Naive thymus-derived CD4-positive, alpha-beta T cell (primary cell): ENCODE measurements at regions of chr19 and their contacts with region 1.

Region 1: DNA sequence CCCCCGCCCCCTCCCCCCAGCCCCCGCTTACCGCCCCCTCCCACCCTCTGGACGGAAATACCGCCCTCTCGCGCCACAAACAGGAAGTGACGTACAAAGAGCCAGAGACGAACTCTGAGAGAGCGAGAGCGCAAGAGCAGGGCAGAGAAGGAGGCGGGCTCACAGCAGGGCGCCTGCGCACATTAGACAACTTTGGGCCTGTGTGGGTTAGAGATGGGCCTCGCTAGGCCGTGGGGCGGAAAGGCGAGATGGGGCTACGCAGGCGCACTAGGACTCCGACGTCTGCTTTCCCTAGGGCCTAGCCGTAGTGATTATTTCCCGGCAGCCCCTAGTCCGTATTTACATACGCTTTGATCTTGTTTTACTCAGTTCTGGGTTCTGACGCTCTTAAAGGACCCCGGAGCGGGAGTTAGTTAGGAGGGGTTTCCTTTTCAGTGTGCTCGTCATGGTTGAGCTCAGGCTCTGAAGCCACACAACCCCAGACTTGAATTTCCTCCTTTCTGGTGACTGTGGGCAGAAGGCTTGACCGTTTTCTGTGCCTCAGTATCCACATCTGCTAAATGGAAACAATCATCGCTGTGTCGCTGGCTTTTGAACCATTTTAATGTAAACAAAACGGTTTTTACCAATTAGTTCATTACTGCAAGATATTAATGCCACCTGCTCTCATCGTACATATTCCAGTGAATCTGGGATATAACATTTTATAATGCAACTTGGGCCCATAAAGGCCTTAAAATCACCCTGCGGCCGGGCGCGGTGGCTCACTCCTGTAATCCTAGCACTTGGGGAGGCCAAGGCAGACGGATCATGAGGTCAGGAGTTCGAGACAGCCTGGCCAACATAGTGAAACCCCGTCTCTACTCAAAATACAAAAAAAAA is 449 bp upstream of the AKT2 start:
- DNase-seq: peak; percentile 84 to 100 (median 99)
- ATAC-seq: peak; percentile 89
- H3K4me3 ChIP-seq: peak overlapping the region; percentile 81
- H3K4me3 Mint-ChIP-seq: peak overlapping the region; percentile 84 to 97 (median 92)
- H3K27ac ChIP-seq: peak overlapping the region; percentile 97
- H3K27ac Mint-ChIP-seq: peak overlapping the region; percentile 96 to 100 (median 99)
- H3K4me1 ChIP-seq: peaks cover 13 to 38% of the 10 kb centered on the region in 2 donors
- H3K4me1 Mint-ChIP-seq: peaks cover 24 to 59% (median 49%) of the 10 kb centered on the region in 7 donors
- H3K27me3 ChIP-seq: no peaks in the 10 kb centered on the region
- H3K27me3 Mint-ChIP-seq: peaks cover 0 to 2% (median 0%) of the 10 kb centered on the region in 5 donors

Region 2: DNA sequence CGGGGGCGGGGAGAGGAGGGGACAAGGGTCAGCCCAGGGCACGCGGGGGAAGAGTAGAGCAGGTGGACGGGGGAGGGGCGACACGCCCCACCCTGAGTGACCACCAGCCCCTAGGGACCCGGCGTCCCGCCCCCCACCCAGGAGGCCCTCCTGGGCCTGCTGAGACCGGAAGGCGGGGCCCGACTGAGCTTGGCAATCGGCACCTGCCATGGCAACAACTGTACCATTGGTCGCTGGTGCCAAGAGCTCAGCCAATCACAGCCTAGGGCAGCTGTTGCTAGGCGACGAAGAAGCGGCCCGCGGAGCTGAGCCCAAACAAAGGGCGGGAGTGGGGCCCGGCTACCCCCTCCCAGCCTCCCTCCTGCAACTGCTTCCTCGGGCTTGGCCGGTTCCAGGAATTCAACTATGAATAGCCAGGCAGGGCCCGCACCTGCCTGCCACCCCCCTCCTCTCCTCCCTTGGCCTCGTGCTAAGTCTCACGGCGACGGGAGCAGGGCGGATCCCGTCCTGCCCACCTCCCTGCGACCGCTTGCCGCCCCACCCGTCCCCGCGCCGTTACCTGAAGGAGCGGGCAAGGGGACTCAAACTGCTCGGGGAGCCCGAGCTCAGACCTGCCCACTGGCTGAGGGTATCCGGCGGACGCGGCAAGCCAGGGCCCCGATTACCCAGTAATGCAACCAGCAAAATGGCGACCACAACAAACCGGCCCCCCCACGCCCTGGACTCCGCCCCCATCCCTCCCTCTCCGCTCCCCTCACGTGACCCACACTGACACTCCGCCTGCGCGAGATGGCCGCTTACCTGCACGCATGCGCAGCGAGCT is 451.9 kb before region 1 on chr19 and contains the start of gene DYRK1B:
- CTCF ChIA-PET with region 1: no interaction called
- POLR2A ChIA-PET with region 1: no interaction called
- intact Hi-C with region 1: loop called in 1 of 2 experiments (anchors 1 kb)
- DNase-seq: peak; percentile 90 to 99 (median 98)
- ATAC-seq: peak; percentile 92
- H3K4me3 ChIP-seq: peak within 1 kb of the TSS; percentile 100
- H3K4me3 Mint-ChIP-seq: peak within 1 kb of the TSS; percentile 60 to 88 (median 81)
- H3K27ac ChIP-seq: peak within 1 kb of the TSS; percentile 96
- H3K27ac Mint-ChIP-seq: peak within 1 kb of the TSS; percentile 85 to 96 (median 92)
- H3K4me1 ChIP-seq: peaks cover 17 to 23% of the 10 kb centered on the region in 2 donors
- H3K4me1 Mint-ChIP-seq: peaks cover 19 to 37% (median 27%) of the 10 kb centered on the region in 7 donors
- H3K27me3 ChIP-seq: no peaks in the 10 kb centered on the region
- H3K27me3 Mint-ChIP-seq: no peaks in the 10 kb centered on the region
- total RNA-seq, gene DYRK1B: 12.3 to 38.9 (median 23.5) TPM

Region 3: GRCh38 chr19:40110570-40110969 is 175.0 kb before region 1 on chr19:
- CTCF ChIA-PET with region 1: no interaction called
- POLR2A ChIA-PET with region 1: no interaction called
- intact Hi-C with region 1: no loop called
- DNase-seq: no peak
- ATAC-seq: no peak
- H3K4me3 ChIP-seq: no peak overlapping the region
- H3K4me3 Mint-ChIP-seq: no peak overlapping the region
- H3K27ac ChIP-seq: no peak overlapping the region
- H3K27ac Mint-ChIP-seq: no peak overlapping the region
- H3K4me1 ChIP-seq: no peaks in the 10 kb centered on the region
- H3K4me1 Mint-ChIP-seq: no peaks in the 10 kb centered on the region
- H3K27me3 ChIP-seq: no peaks in the 10 kb centered on the region
- H3K27me3 Mint-ChIP-seq: peaks cover 0 to 12% (median 7%) of the 10 kb centered on the region in 5 donors

Region 4: DNA sequence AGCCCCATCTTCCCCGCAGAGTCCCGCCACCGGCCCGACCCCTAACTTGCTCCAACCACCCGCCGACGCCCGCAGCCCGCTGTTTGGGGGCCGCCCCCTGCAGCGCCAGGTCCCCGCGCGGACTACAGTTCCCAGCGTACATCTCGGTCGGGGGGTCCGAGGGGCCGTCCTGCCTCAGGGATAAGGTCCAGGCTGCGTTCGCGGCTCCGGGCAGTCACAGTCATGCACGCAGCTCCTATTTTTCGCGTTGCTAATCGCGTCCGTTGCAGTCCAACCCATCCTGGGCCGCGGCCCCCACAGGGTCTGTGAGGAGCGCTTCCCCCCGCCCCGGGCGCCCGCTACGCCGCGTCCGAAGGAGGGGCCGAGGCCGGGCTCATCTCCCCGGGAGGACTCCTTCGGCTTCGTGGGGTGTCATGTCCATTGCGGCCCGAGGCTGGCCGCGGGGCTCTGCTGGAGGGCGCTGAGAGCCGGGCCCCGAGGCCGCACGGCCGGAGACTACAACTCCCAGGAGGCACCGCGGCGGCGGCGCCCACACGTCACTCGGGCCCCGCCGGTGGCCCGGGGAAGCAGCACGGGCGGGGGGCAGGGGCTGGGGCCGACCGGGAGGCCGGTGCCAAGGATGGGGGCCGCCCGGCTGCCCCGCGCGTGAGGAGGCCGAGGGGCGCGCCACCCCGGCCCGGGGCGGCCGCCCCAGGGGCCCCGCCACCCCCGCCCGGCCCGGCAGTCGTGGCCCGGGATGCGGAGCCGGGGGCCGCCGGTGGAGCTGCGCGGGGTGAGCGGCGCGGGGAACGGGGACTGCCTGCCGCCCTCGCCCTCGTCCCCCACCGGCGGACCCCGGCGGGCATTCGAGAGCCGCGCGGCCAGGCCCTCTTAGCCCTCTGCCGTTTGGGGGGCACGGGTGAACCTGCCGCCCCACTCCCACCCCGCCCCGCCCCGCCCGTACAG is 94.4 kb before region 1 on chr19 and contains the start of gene MAP3K10:
- CTCF ChIA-PET with region 1: no interaction called
- POLR2A ChIA-PET with region 1: no interaction called
- intact Hi-C with region 1: loop called (anchors 1 kb)
- DNase-seq: peak; percentile 50 to 84 (median 67)
- ATAC-seq: peak; percentile 95
- H3K4me3 ChIP-seq: peak within 1 kb of the TSS; percentile 97
- H3K4me3 Mint-ChIP-seq: peak within 1 kb of the TSS; percentile 76 to 92 (median 86)
- H3K27ac ChIP-seq: peak within 1 kb of the TSS; percentile 86
- H3K27ac Mint-ChIP-seq: peak within 1 kb of the TSS; percentile 53 to 94 (median 87)
- H3K4me1 ChIP-seq: peaks cover 5 to 10% of the 10 kb centered on the region in 2 donors
- H3K4me1 Mint-ChIP-seq: peaks cover 14 to 39% (median 30%) of the 10 kb centered on the region in 7 donors
- H3K27me3 ChIP-seq: no peaks in the 10 kb centered on the region
- H3K27me3 Mint-ChIP-seq: no peaks in the 10 kb centered on the region
- total RNA-seq, gene MAP3K10: 22.3 to 31.5 (median 27.0) TPM

Region 5: DNA sequence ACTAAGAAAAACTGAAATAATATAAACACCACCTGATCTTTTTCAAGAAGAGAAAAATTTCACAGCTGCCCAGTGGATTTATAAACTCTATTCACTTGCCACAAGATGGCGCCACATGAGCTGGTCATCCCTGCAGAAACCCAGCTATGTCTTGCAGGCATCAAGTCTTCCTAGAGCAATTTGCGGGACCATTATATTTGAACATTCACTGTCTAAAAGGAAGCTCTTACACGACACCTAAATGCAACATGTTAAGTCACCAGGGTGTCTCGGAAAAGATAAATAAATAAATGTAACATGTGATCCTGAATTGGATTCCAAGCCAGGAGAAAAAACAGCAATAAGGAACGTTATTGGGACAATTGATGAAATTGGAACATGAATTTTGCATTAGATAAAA is 19.8 kb after region 1 on chr19:
- CTCF ChIA-PET with region 1: interaction called, 3 read pairs
- POLR2A ChIA-PET with region 1: no interaction called
- intact Hi-C with region 1: loop called in 1 of 2 experiments (anchors 1 kb)
- DNase-seq: peak; percentile 39 to 75 (median 63)
- ATAC-seq: peak; percentile 80
- H3K4me3 ChIP-seq: no peak overlapping the region
- H3K4me3 Mint-ChIP-seq: no peak overlapping the region
- H3K27ac ChIP-seq: no peak overlapping the region
- H3K27ac Mint-ChIP-seq: no peak overlapping the region
- H3K4me1 ChIP-seq: no peaks in the 10 kb centered on the region
- H3K4me1 Mint-ChIP-seq: peaks cover 0 to 5% (median 4%) of the 10 kb centered on the region in 7 donors
- H3K27me3 ChIP-seq: no peaks in the 10 kb centered on the region
- H3K27me3 Mint-ChIP-seq: no peaks in the 10 kb centered on the region

Region 6: GRCh38 chr19:40425450-40426287 is 140.1 kb after region 1 on chr19 and contains the start of gene SERTAD1:
- CTCF ChIA-PET with region 1: no interaction called
- POLR2A ChIA-PET with region 1: no interaction called
- intact Hi-C with region 1: loop called in 1 of 2 experiments (anchors 1 kb)
- DNase-seq: peak; percentile 99 to 100 (median 100)
- ATAC-seq: peak; percentile 96
- H3K4me3 ChIP-seq: peak within 1 kb of the TSS; percentile 77
- H3K4me3 Mint-ChIP-seq: peak within 1 kb of the TSS; percentile 90 to 99 (median 96)
- H3K27ac ChIP-seq: peak within 1 kb of the TSS; percentile 87
- H3K27ac Mint-ChIP-seq: peak within 1 kb of the TSS; percentile 92 to 100 (median 98)
- H3K4me1 ChIP-seq: peaks cover 15 to 18% of the 10 kb centered on the region in 2 donors
- H3K4me1 Mint-ChIP-seq: peaks cover 12 to 38% (median 24%) of the 10 kb centered on the region in 7 donors
- H3K27me3 ChIP-seq: no peaks in the 10 kb centered on the region
- H3K27me3 Mint-ChIP-seq: peaks cover 0 to 2% (median 0%) of the 10 kb centered on the region in 5 donors
- total RNA-seq, gene SERTAD1: 8.1 to 30.9 (median 13.5) TPM

Region 7: DNA sequence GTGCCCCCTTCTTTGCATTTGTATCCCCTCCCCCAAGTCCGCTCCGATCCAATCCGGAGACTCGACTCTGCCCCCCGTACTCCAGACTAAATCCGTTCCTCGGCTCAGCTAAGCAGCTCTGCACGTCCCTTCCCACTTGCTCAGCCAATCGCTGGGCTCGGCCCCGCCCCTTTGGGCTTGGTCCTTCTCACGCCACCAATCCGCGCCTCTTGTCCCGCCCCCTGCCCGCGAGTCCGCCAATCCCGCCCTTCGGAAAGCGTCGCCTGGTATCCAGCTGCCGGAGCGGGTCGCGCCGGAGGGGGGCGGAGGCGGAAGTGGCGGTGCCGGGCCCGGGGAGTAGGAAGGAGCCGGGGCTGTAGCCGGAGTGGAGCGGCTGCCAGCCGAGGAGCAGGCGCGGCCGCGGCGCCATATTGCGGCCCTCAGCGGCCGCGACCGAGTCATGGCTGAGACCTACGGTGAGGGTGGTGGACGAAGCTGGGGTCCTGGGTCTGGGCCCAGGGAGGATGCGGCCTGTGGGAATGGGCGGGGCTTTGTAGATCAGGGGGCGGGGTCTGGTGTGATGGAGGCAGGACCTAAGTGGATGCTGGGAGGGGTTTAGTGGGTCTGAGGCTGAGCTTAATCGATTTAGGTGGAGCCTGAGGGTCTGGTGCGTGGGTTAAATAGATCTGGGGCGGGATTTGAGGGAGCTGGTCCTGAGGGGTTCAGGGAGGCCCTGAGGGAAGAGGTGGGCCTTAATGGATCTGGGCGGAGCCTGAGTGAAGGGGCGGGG is 492.5 kb after region 1 on chr19 and contains the start of gene RAB4B:
- CTCF ChIA-PET with region 1: no interaction called
- POLR2A ChIA-PET with region 1: no interaction called
- intact Hi-C with region 1: loop called in 1 of 2 experiments (anchors 10 kb)
- DNase-seq: peak; percentile 99 to 100 (median 100)
- ATAC-seq: peak; percentile 92
- H3K4me3 ChIP-seq: peak within 1 kb of the TSS; percentile 97
- H3K4me3 Mint-ChIP-seq: peak within 1 kb of the TSS; percentile 91 to 99 (median 96)
- H3K27ac ChIP-seq: peak within 1 kb of the TSS; percentile 92
- H3K27ac Mint-ChIP-seq: peak within 1 kb of the TSS; percentile 87 to 99 (median 98)
- H3K4me1 ChIP-seq: peaks cover 18 to 24% of the 10 kb centered on the region in 2 donors
- H3K4me1 Mint-ChIP-seq: peaks cover 31 to 49% (median 39%) of the 10 kb centered on the region in 7 donors
- H3K27me3 ChIP-seq: no peaks in the 10 kb centered on the region
- H3K27me3 Mint-ChIP-seq: no peaks in the 10 kb centered on the region
- total RNA-seq, gene RAB4B: 37.6 to 63.0 (median 52.5) TPM